ENCODE measurements at regions of chr13 and their contacts with region 1.

Region 1: DNA sequence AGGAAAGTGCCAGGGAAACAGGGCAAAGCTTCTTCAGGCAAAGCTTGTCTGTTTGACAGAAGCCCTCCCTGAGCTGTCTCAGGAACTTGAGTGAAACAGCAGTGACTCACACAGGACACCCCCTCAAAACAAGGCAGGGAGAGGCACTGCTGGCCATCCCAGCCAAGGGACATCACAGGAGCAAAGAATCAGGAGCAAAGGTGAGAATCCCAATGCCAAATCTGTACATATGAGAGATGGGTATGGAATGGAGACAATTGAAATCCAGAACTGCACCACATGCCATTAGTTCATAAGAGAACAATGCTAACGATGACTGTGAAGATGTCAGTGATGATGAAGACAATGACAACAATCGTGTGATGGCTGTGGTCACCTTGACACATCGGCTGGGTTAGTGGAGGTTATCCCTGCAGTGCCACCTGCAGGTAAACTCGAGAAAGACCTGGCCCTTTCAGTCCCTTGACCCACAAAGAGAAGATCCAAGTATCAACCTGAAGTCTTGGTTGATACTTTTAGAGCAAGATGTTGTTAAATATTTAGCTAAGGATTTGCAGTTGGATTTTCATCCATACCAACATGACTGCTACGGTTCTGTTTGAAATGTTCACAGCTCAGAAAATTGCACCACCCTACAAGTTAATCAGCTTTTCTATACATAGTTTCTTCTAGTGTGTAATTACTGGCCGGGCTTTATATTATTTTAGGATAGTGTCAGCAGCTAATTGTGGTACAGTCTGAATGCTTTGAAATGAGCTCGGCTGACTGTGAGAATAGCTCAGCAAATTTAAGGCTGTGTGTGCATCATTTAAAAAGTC is 42.0 kb upstream of the IPO5 start:
- H3K4me3 ChIP-seq: no peak overlapping the region
- H3K27ac ChIP-seq: no peak overlapping the region
- H3K4me1 ChIP-seq: no peaks in the 10 kb centered on the region
- CTCF ChIP-seq: no peak

Region 2: DNA sequence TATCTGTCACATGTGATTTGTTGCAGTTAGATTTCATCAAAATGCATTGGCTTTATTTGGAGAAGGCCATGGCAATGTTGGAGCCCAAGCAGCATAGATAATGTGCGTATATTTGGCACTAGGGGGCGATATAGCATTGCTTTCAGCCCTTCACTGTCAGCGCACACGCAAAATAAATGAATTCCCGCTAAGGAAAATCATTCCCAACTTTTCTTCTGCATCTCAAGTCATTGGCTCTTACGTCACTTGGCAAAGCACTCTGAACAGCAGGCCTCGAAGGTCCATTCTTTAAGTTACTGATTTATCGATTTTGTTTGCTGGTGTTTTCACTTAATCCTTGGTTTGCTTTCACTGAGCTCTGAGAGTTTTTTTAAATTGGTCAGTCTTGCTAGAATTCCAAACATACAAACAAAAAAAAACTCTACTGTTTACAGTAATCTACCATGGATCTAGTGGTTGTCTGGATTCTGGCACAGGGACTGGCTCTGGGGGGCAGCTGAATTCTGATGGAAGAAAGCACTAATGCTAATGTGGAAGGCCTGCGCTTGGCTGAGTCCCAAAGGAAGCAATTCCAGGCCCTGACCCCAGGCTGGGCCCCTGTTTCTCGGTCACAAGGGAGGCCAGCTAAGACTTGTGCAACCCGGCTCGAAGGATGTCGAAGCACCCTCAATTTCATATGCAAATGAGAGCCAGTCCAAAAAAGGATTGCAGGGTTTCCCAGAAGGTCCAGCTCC is 55.8 kb before region 1 on chr13:
- CTCF ChIA-PET with region 1: interaction called, 12 read pairs
- POLR2A ChIA-PET with region 1: no interaction called
- H3K4me3 ChIP-seq: no peak overlapping the region
- H3K27ac ChIP-seq: no peak overlapping the region
- H3K4me1 ChIP-seq: peaks cover 3% of the 10 kb centered on the region; the same call in 1 of the 2 replicates
- CTCF ChIP-seq: no peak; the same call in 1 of the 2 replicates